Activated naive CD4-positive, alpha-beta T cell treated with anti-CD3 and anti-CD28 coated beads, Interleukin-2, amount 10 ng/mL, durations not matched to agents 7 days and 5 days (primary cell): ENCODE measurements at regions of chr3 and their contacts with region 1.

Region 1: GRCh38 chr3:149571381-149571780 is 86.4 kb downstream of the WWTR1 start:
- DNase-seq: no peak
- H3K4me3 Mint-ChIP-seq: no peak overlapping the region
- H3K27ac Mint-ChIP-seq: no peak overlapping the region
- H3K4me1 Mint-ChIP-seq: peaks cover 27% of the 10 kb centered on the region
- H3K27me3 Mint-ChIP-seq: peaks cover under 1% of the 10 kb centered on the region

Region 2: GRCh38 chr3:149581681-149582370 is 10.4 kb after region 1 on chr3:
- CTCF ChIA-PET with region 1: interaction called, 27 read pairs
- DNase-seq: no peak
- H3K4me3 Mint-ChIP-seq: no peak overlapping the region
- H3K27ac Mint-ChIP-seq: no peak overlapping the region
- H3K4me1 Mint-ChIP-seq: peaks cover 14% of the 10 kb centered on the region
- H3K27me3 Mint-ChIP-seq: peaks cover 16% of the 10 kb centered on the region

Region 3: GRCh38 chr3:149657926-149658733 is 86.7 kb after region 1 on chr3 and contains the start of gene WWTR1:
- CTCF ChIA-PET with region 1: interaction called, 34 read pairs
- DNase-seq: peak; percentile 42
- H3K4me3 Mint-ChIP-seq: peak within 1 kb of the TSS; percentile 76
- H3K27ac Mint-ChIP-seq: no peak within 1 kb of the TSS
- H3K4me1 Mint-ChIP-seq: peaks cover 10% of the 10 kb centered on the region
- H3K27me3 Mint-ChIP-seq: peaks cover 69% of the 10 kb centered on the region

Region 4: DNA sequence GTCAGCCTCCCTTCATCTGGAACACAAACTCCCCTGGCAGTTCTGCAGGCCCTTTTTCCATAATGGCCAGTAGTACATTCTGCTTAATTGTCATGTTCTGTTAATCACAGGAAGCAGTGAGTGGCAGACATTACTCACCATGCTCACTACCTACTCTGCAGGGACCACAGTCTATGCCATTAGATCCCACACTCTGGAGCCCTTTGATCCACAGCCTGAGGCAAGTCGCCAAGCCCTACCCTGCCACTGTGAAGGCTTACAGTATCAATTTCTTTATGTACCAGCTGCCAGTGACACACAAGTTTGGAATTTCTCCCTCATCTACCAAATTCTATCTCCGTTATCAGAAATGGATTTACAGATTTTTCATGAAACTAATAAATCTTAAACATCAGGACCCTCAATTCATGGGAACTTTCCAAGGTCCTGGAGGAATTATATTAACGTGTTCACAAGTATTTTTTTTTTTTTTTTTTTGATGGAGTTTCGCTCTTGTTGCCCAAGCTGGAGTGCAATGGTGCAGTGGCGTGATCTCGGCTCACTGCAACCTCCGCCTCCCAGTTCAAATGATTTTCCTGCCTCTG is 107.1 kb after region 1 on chr3:
- CTCF ChIA-PET with region 1: no interaction called
- DNase-seq: no peak
- H3K4me3 Mint-ChIP-seq: no peak overlapping the region
- H3K27ac Mint-ChIP-seq: no peak overlapping the region
- H3K4me1 Mint-ChIP-seq: no peaks in the 10 kb centered on the region
- H3K27me3 Mint-ChIP-seq: peaks cover 4% of the 10 kb centered on the region

Region 5: GRCh38 chr3:149717391-149718056 is 146.1 kb after region 1 on chr3:
- CTCF ChIA-PET with region 1: interaction called, 22 read pairs
- DNase-seq: peak; percentile 45
- H3K4me3 Mint-ChIP-seq: no peak overlapping the region
- H3K27ac Mint-ChIP-seq: no peak overlapping the region
- H3K4me1 Mint-ChIP-seq: no peaks in the 10 kb centered on the region
- H3K27me3 Mint-ChIP-seq: peaks cover 4% of the 10 kb centered on the region

Region 6: DNA sequence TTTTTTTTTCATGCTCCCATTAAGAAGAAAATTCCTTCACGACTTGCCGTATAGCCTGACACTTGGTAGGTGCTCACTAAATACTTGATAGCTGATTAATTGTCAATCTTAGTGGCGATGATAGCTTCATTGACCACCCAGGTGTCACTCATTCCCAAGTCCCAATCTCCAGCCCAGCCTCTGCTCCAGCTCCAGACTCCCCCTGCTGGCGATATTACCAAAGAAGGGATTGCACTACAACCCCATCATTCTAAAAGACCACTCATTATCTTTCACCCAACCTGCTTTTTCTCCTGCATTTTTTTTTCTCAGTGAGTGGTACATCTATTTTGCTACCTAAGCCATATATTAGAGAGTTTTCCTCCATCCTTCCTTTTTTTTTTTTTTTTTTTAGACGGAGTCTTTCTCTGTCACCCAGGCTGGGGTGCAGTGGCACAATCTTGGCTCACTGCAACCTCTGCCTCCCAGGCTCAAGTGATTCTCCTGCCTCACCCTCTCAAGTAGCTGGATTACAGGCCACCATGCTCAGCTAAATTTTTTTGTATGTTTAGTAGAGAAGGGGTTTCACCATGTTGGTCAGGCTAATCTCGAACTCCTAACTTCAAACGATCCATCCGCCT is 200.4 kb after region 1 on chr3:
- CTCF ChIA-PET with region 1: interaction called, 21 read pairs
- DNase-seq: peak; percentile 36
- H3K4me3 Mint-ChIP-seq: no peak overlapping the region
- H3K27ac Mint-ChIP-seq: no peak overlapping the region
- H3K4me1 Mint-ChIP-seq: no peaks in the 10 kb centered on the region
- H3K27me3 Mint-ChIP-seq: peaks cover 13% of the 10 kb centered on the region